Head of caudate nucleus (tissue), 42 donors: ENCODE measurements at regions of chr19 and their contacts with region 1.

Region 1: GRCh38 chr19:50476224-50476942 is at the starts of genes EMC10 and GARIN5A:
- DNase-seq: peak; percentile 79 to 95 (median 90)

Region 2: DNA sequence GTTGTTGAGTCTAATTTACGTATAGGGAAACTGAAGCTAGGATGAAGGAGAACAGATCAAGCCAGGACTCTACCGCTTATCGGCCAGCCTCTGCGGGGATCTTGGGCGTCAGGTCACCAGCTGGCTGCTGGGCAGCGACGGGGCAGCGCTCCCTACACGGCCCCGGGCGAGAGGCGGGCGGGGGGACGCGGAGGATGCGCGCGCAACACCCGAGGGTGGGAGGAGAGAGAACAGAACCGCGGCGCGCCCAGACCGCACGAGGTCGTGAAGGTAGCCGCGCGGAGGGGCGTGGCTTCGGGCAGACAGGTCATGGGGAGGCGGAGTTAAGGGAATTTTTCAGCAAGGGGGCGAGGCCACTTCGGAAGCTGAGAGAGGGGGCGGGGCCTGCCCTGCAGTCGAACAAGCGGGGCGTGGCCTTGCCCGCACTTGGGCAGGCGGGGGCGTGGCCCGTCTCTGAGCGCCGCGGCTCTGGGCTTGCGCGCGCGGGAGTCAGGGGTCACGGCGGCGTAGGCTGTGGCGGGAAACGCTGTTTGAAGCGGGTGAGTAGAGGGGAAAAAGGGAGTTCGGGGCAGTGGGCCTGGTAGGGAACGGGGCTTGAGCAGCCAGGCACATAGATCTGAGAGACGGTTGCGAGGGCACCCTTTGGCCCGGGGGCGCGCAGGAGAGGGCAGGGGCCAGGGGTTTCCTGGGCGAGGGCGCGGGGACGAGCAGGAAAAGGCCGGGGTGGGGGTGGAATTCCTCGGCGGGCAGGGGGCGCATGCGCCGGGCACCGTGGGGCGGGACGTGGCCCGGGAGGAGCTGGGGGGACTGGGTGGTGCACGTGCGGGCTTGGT is 92.3 kb before region 1 on chr19 and contains the start of gene POLD1:
- intact Hi-C with region 1: loop called (anchors 5 kb)
- DNase-seq: peak; percentile 91 to 99 (median 96)

Region 3: DNA sequence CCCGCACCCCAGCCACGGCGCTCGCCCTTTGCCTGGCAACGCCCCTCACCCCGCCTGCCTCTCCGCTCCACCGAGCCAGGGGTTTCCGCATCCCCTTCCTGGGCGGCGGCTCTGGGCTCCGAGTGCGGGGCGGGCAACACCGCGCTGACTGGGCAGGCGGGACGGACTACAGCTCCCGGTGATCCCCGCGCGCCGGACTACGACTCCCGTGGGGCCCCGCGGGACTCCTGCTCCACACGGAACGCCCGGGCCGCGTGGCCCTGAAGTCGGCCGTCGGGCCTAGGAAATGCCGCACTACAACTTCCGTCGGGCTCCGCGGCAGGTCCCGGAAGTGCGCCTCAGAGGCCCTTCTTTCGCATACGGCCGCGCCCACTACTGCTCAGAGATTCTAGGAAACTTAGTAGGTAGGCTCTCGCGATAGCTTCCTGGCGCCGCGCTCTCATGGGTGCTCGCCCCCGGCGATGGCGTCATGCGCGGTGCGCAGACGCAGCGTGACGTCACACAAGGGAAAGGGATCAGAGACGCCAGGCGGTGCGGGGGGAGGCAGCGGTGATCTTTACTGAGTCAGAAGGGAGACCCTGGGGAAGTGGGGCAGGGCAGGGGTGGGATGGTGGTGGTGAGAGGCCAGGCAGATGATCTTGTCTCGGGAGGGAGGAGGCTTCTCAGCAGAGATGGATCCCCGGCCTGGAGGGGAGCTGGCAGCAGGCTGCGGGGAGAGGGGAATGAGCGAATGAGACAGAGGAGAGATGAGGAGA is 34.9 kb after region 1 on chr19 and contains the start of gene JOSD2:
- intact Hi-C with region 1: loop called (anchors 2 kb)
- DNase-seq: peak; percentile 97 to 99 (median 99)

Region 4: GRCh38 chr19:50568321-50569075 is 92.1 kb after region 1 on chr19 and contains the start of gene LRRC4B:
- intact Hi-C with region 1: no loop called
- DNase-seq: peak in 39 of 42 donors; percentile 40 to 90 (median 77)

Region 5: GRCh38 chr19:50590191-50590590 is 113.8 kb after region 1 on chr19:
- intact Hi-C with region 1: no loop called
- DNase-seq: no peak